ENCODE measurements at regions of chr3 and their contacts with region 1.

Region 1: GRCh38 chr3:69104996-69105719 is 17.2 kb downstream of the LMOD3 start:
- DNase-seq: no peak
- ATAC-seq: no peak
- H3K4me3 ChIP-seq: no peak overlapping the region
- H3K4me3 Mint-ChIP-seq: no peak overlapping the region
- H3K27ac ChIP-seq: no peak overlapping the region
- H3K27ac Mint-ChIP-seq: no peak overlapping the region
- H3K4me1 ChIP-seq: peaks cover 28% of the 10 kb centered on the region
- H3K4me1 Mint-ChIP-seq: peaks cover 43% of the 10 kb centered on the region
- H3K27me3 ChIP-seq: no peaks in the 10 kb centered on the region
- H3K27me3 Mint-ChIP-seq: no peaks in the 10 kb centered on the region
- CTCF ChIP-seq: no peak

Region 2: DNA sequence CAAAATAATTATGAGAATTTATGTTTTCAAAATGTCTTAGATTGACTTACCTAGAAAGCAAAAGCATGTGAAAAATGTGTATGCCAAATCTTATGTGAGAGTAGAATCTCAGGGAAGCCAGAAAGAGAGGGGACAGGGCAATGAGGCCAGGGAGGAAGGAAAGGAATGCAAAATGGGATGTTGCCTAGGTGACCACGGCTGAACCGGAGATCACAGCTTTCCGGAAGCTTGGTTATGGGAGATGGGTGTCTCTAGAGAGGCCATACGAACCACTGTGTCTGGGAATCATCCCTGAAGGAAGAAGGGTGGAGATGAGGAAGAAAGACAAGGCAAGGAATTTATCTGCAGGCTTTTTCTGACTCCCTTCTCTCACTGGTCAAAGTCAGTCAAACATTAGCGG is 1526.7 kb before region 1 on chr3:
- CTCF ChIA-PET with region 1: no interaction called
- POLR2A ChIA-PET with region 1: no interaction called
- intact Hi-C with region 1: no loop called
- DNase-seq: no peak
- ATAC-seq: no peak
- H3K4me3 ChIP-seq: no peak overlapping the region
- H3K4me3 Mint-ChIP-seq: no peak overlapping the region
- H3K27ac ChIP-seq: no peak overlapping the region
- H3K27ac Mint-ChIP-seq: peak overlapping the region; percentile 16
- H3K4me1 ChIP-seq: peaks cover 5% of the 10 kb centered on the region
- H3K4me1 Mint-ChIP-seq: peaks cover 42% of the 10 kb centered on the region
- H3K27me3 ChIP-seq: no peaks in the 10 kb centered on the region
- H3K27me3 Mint-ChIP-seq: no peaks in the 10 kb centered on the region
- CTCF ChIP-seq: no peak

Region 3: GRCh38 chr3:69120879-69121464 is 15.8 kb after region 1 on chr3:
- CTCF ChIA-PET with region 1: interaction called, 17 read pairs
- POLR2A ChIA-PET with region 1: interaction called, 9 read pairs
- intact Hi-C with region 1: no loop called
- DNase-seq: peak; percentile 63 to 88 (median 82)
- ATAC-seq: peak; percentile 92
- H3K4me3 ChIP-seq: no peak overlapping the region
- H3K4me3 Mint-ChIP-seq: no peak overlapping the region
- H3K27ac ChIP-seq: no peak overlapping the region
- H3K27ac Mint-ChIP-seq: no peak overlapping the region
- H3K4me1 ChIP-seq: no peaks in the 10 kb centered on the region
- H3K4me1 Mint-ChIP-seq: peaks cover 5% of the 10 kb centered on the region
- H3K27me3 ChIP-seq: no peaks in the 10 kb centered on the region
- H3K27me3 Mint-ChIP-seq: no peaks in the 10 kb centered on the region
- CTCF ChIP-seq: peak; percentile 96

Measured in CD8-positive, alpha-beta T cell (primary cell).